ENCODE measurements at regions of chr2 and their contacts with region 1.

Region 1: DNA sequence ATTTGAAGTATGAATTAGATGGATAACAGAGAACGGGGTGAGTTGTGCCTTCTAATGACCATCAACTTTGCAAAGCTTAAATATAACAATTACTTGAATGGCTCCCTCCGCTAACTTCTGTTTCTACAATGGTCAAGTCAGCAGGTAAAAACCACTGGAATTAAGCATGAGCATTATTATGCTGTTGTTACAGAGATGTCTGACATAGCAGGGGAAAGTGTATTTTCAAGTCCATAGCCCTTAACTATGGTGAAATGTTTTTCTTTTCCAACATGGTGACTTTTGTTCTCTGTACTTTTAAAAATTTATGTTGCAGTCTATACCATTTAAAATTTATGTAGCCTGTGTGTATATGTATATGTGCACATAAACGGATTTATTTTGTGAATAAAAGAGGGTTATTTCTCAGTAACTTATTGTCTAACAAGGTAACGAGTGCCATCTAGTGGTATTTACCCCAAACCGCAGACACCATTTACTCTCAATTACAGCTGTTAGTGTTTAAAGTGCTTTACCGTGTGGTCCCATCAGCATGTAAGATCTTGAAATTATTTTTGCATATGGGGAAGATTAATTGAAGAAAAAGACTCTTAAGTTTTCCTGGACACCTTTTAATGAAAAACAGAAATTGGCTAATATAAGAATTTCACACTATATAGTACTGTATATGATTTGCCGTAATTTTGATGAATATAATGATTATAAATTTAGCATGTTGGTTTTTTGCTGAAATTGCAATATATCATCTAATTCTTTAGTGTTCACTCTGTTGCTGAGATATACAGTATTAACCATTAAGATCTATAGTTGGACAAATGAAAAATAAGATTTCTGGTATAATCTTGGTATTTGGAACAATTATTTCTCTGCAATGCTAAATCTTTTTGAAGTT is 78.2 kb downstream of the UBE2E3 start:
- DNase-seq: peak; percentile 50 to 76 (median 73)
- H3K4me3 ChIP-seq: no peak overlapping the region
- H3K27ac ChIP-seq: no peak overlapping the region
- H3K4me1 ChIP-seq: no peaks in the 10 kb centered on the region
- H3K27me3 ChIP-seq: no peaks in the 10 kb centered on the region

Region 2: GRCh38 chr2:180125245-180125962 is 933.2 kb before region 1 on chr2:
- CTCF ChIA-PET with region 1: interaction called, 39 read pairs
- POLR2A ChIA-PET with region 1: no interaction called
- DNase-seq: peak; percentile 86 to 94 (median 92)
- H3K4me3 ChIP-seq: peak overlapping the region in 1 of 7 experiments; percentile 34
- H3K27ac ChIP-seq: no peak overlapping the region
- H3K4me1 ChIP-seq: peaks cover 0 to 5% (median 0%) of the 10 kb centered on the region in 4 experiments
- H3K27me3 ChIP-seq: no peaks in the 10 kb centered on the region

Region 3: DNA sequence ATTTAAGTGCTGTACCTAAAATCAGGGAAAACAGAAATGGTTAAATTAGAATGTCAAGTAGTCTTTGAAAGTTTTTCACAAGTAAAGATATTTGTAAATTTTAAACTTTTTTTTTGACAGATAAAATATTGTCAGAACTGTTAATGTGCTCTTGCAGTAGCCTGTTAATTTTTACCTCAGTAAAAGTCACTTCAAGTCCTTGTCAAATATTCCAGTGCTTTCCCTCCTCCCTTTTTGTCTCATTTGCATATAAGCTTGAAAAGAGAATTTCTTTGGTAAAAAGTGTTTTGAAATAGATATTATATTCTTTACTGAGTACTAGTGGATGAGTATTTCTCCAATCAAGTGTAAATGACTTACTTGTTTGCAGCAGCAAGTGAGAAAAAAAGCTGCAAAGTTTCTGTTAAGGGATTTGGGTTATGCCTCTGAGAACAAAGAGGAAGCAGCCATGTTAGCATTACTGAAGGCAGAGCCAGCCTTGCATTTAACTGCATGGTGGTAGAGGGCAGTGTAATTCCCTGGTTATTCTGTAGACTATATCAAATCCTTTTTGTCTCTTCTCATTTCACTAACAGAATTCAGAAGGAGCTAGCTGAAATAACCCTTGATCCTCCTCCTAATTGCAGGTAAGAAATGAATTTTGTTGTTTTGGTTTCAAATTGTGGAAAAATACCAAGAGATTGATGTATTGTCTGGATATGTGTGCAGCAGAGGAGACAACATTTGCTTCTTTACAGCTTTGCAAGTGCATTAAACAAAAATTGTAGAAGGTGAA is 75.0 kb before region 1 on chr2:
- CTCF ChIA-PET with region 1: interaction called, 10 read pairs
- POLR2A ChIA-PET with region 1: no interaction called
- DNase-seq: peak; percentile 60 to 76 (median 72)
- H3K4me3 ChIP-seq: peak overlapping the region in 5 of 7 experiments; percentile 0 to 48 (median 43)
- H3K27ac ChIP-seq: peak overlapping the region in 1 of 2 experiments; percentile 37
- H3K4me1 ChIP-seq: peaks cover 15 to 35% (median 26%) of the 10 kb centered on the region in 4 experiments
- H3K27me3 ChIP-seq: no peaks in the 10 kb centered on the region

Region 4: DNA sequence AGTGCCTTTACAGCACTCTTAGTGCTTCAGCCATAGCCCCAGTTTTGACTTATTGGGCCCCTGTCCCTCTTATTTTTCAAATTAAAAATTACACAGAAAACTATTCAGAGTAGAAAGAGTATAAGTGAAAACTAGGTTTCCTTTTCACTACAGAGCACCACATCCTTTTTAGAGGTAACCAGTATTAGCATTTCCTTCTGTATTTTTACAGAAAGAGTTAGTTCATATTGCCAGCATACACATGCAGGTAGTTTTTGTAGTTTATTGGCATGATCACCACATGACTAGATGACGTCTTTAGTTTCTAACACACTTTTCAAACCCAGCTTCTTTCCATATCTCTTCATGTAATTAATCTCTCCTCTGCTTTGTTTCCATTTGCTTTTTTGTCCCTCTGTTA is 11.8 kb before region 1 on chr2:
- CTCF ChIA-PET with region 1: interaction called, 20 read pairs
- POLR2A ChIA-PET with region 1: no interaction called
- DNase-seq: peak in 2 of 3 donors; percentile 35 to 47
- H3K4me3 ChIP-seq: peak overlapping the region in 1 of 7 experiments; percentile 10
- H3K27ac ChIP-seq: peak overlapping the region in 1 of 2 experiments; percentile 25
- H3K4me1 ChIP-seq: peaks cover 6 to 19% (median 11%) of the 10 kb centered on the region in 4 experiments
- H3K27me3 ChIP-seq: no peaks in the 10 kb centered on the region

Region 5: GRCh38 chr2:181142514-181142913 is 83.9 kb after region 1 on chr2:
- CTCF ChIA-PET with region 1: no interaction called
- POLR2A ChIA-PET with region 1: no interaction called
- DNase-seq: no peak
- H3K4me3 ChIP-seq: no peak overlapping the region
- H3K27ac ChIP-seq: no peak overlapping the region
- H3K4me1 ChIP-seq: peaks cover 0 to 7% (median 4%) of the 10 kb centered on the region in 4 experiments
- H3K27me3 ChIP-seq: no peaks in the 10 kb centered on the region

Measured in common myeloid progenitor, CD34-positive (primary cell).